CD4-positive, alpha-beta memory T cell (primary cell): ENCODE measurements at regions of chr15 and their contacts with region 1.

Region 1: GRCh38 chr15:60592371-60593169 is 113.6 kb upstream of the ICE2 start:
- DNase-seq: peak; percentile 88 to 91 (median 90)
- H3K4me3 ChIP-seq: peak overlapping the region; percentile 39 to 75
- H3K4me3 Mint-ChIP-seq: peak overlapping the region; percentile 80 to 90 (median 87)
- H3K27ac ChIP-seq: peak overlapping the region; percentile 92
- H3K27ac Mint-ChIP-seq: peak overlapping the region; percentile 82 to 94 (median 92)
- H3K4me1 ChIP-seq: peaks cover 36% of the 10 kb centered on the region
- H3K4me1 Mint-ChIP-seq: peaks cover 28 to 55% (median 37%) of the 10 kb centered on the region in 4 donors
- H3K27me3 ChIP-seq: no peaks in the 10 kb centered on the region
- H3K27me3 Mint-ChIP-seq: no peaks in the 10 kb centered on the region

Region 2: DNA sequence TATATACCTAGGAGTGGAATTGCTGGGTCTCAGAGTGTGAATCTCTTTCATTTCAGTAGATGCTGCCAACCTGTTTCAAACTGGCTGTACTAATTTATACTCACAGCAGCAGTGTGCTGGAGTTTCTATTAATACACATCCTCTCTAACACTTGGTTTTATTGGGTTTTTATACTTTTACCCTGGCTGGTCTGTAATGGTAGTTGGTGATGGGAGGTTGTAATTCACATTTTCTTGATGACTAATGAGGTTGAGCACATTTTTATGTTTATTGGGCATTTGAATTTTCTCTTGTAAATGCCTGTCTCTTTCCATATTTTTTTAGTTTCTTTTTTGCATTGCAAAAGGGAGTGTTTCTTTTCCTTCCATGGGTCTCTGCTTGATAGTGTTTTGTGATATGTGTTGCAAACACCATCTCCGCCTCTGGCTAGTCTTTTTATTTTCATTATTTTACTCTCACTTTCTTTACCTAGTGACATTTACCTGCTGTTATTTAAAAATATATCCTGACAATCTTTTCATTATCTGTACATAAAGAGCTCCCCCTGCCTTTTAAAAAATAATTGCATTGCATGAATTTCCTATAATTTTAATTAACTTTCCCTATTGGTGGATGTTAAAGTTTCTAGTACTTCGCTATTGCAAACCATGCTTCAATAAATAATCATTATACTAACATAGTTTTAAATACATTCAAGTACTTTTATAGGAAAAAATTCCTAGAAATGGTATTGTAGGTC is 1030.0 kb before region 1 on chr15:
- CTCF ChIA-PET with region 1: no interaction called
- POLR2A ChIA-PET with region 1: no interaction called
- intact Hi-C with region 1: no loop called
- DNase-seq: no peak
- H3K4me3 ChIP-seq: no peak overlapping the region
- H3K4me3 Mint-ChIP-seq: no peak overlapping the region
- H3K27ac ChIP-seq: no peak overlapping the region
- H3K27ac Mint-ChIP-seq: no peak overlapping the region
- H3K4me1 ChIP-seq: no peaks in the 10 kb centered on the region
- H3K4me1 Mint-ChIP-seq: peaks cover 0 to 3% (median 0%) of the 10 kb centered on the region in 4 donors
- H3K27me3 ChIP-seq: no peaks in the 10 kb centered on the region
- H3K27me3 Mint-ChIP-seq: peaks cover 3% of the 10 kb centered on the region in 2 donors

Region 3: DNA sequence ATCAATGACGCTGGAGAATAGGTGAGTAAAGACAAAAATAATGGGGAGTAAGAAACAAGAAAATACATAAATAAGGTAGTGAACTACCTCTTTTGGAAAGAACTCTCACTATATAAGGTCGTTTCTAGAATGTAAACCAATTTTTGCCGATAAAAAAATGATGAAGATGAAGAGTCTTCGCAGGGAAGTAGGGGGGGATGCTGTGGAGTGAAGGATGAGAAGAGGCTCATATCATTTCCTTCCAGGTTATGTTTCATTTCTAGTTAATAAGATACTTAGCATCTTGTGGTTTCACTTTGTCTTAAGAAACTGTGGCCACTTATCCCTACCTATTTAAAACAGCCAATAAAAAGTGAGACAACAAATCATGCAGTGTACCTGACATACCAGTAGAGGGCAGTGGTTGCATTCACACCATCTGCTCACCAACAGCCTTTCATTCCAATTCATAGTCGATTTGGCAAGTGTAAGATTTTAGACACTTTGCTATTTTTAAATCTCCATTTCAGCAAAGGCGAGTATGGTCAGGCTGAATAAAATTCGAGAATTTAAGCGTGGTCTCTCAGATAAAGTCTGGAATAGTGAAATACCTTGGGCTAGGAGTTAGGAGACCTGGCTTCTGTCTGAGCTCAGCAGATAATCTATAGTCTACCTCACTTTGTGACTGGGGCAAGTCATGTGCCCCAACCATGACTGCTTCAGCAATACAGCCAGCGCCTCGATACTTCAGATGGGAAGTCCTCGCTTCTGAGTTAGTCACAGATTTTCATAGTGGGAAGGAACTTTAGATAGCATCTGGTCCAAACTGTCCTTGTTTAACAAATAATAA is 84.8 kb before region 1 on chr15:
- CTCF ChIA-PET with region 1: interaction called, 4 read pairs
- POLR2A ChIA-PET with region 1: interaction called, 22 read pairs
- intact Hi-C with region 1: no loop called
- DNase-seq: peak; percentile 66 to 79 (median 78)
- H3K4me3 ChIP-seq: no peak overlapping the region
- H3K4me3 Mint-ChIP-seq: peak overlapping the region in 6 of 8 donors; percentile 0 to 67 (median 28)
- H3K27ac ChIP-seq: peak overlapping the region; percentile 21
- H3K27ac Mint-ChIP-seq: peak overlapping the region; percentile 83 to 94 (median 91)
- H3K4me1 ChIP-seq: peaks cover 43% of the 10 kb centered on the region
- H3K4me1 Mint-ChIP-seq: peaks cover 29 to 55% (median 41%) of the 10 kb centered on the region in 4 donors
- H3K27me3 ChIP-seq: no peaks in the 10 kb centered on the region
- H3K27me3 Mint-ChIP-seq: no peaks in the 10 kb centered on the region

Region 4: DNA sequence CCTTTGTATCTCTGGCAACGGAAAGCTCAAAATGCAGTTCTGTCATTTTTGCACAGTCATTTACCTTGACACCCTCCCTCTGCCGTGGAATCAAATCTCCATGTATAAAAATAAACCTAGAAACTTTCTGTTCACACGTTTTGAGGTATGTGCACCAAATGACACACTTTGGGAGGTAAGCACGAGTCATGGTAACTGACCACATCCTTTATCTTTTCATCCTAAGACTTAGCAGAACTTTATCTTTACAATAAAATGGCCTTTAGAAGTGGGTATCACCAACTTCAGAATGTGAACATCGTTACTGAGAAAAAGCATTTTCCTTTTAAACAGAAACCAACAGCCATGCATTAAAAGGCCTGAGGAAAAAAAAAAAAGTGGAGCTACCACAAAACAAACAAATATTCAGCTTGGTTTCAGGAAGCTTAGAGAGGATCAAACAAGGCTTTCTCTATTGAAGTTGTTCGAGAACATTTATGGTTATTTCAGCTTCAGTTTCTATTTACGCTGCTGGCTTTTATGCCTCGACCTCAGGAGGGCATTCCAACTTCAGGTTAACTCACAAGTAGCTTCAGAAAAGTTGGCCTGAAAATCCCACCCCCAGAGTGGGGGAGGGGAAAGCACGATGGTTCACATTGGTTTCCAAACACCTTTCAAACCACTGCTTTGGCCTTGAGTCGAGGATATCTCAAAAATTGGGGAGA is 57.4 kb after region 1 on chr15:
- CTCF ChIA-PET with region 1: interaction called, 5 read pairs
- POLR2A ChIA-PET with region 1: interaction called, 26 read pairs
- intact Hi-C with region 1: loop called (anchors 2 kb)
- DNase-seq: peak; percentile 73 to 85 (median 81)
- H3K4me3 ChIP-seq: peak overlapping the region in 1 of 2 donors; percentile 46
- H3K4me3 Mint-ChIP-seq: peak overlapping the region; percentile 67 to 92 (median 85)
- H3K27ac ChIP-seq: peak overlapping the region; percentile 66
- H3K27ac Mint-ChIP-seq: peak overlapping the region; percentile 93 to 99 (median 97)
- H3K4me1 ChIP-seq: peaks cover 46% of the 10 kb centered on the region
- H3K4me1 Mint-ChIP-seq: peaks cover 36 to 55% (median 47%) of the 10 kb centered on the region in 4 donors
- H3K27me3 ChIP-seq: no peaks in the 10 kb centered on the region
- H3K27me3 Mint-ChIP-seq: no peaks in the 10 kb centered on the region

Region 5: DNA sequence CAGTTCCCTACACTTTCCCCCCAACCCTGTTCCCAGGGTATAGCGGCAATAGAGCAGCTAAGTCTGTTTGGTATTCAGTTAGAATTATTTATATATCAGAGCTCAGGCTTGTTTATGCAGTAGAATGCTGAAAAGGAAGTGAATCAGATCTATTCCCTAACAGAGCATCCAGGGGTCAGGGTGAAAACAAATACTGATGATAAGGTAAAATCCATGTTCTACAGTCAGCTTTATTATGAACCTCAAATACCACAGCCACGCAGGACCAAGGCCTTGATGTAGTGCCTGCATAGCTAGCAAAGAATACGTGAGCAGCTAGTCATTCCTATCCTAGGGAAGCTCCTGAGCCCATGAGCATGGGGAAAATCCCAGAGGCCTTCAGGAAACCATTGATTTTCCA is 116.1 kb after region 1 on chr15:
- CTCF ChIA-PET with region 1: interaction called, 3 read pairs
- POLR2A ChIA-PET with region 1: interaction called, 14 read pairs
- intact Hi-C with region 1: loop called (anchors 5 kb)
- DNase-seq: no peak
- H3K4me3 ChIP-seq: no peak overlapping the region
- H3K4me3 Mint-ChIP-seq: peak overlapping the region in 4 of 8 donors; percentile 0 to 48 (median 6)
- H3K27ac ChIP-seq: no peak overlapping the region
- H3K27ac Mint-ChIP-seq: peak overlapping the region in 3 of 7 donors; percentile 19 to 62 (median 41)
- H3K4me1 ChIP-seq: peaks cover 38% of the 10 kb centered on the region
- H3K4me1 Mint-ChIP-seq: peaks cover 35 to 53% (median 41%) of the 10 kb centered on the region in 4 donors
- H3K27me3 ChIP-seq: no peaks in the 10 kb centered on the region
- H3K27me3 Mint-ChIP-seq: no peaks in the 10 kb centered on the region

Region 6: GRCh38 chr15:60859996-60860494 is 267.5 kb after region 1 on chr15:
- CTCF ChIA-PET with region 1: interaction called, 81 read pairs
- POLR2A ChIA-PET with region 1: interaction called, 18 read pairs
- intact Hi-C with region 1: no loop called
- DNase-seq: no peak
- H3K4me3 ChIP-seq: no peak overlapping the region
- H3K4me3 Mint-ChIP-seq: no peak overlapping the region
- H3K27ac ChIP-seq: no peak overlapping the region
- H3K27ac Mint-ChIP-seq: peak overlapping the region in 1 of 7 donors; percentile 1
- H3K4me1 ChIP-seq: peaks cover 6% of the 10 kb centered on the region
- H3K4me1 Mint-ChIP-seq: peaks cover 22 to 44% (median 33%) of the 10 kb centered on the region in 4 donors
- H3K27me3 ChIP-seq: no peaks in the 10 kb centered on the region
- H3K27me3 Mint-ChIP-seq: no peaks in the 10 kb centered on the region

Region 7: GRCh38 chr15:60932051-60932915 is 339.7 kb after region 1 on chr15:
- CTCF ChIA-PET with region 1: interaction called, 13 read pairs
- POLR2A ChIA-PET with region 1: interaction called, 7 read pairs
- intact Hi-C with region 1: loop called (anchors 5 kb)
- DNase-seq: peak; percentile 52 to 86 (median 61)
- H3K4me3 ChIP-seq: no peak overlapping the region
- H3K4me3 Mint-ChIP-seq: peak overlapping the region in 6 of 8 donors; percentile 5 to 65 (median 31)
- H3K27ac ChIP-seq: no peak overlapping the region
- H3K27ac Mint-ChIP-seq: peak overlapping the region in 4 of 7 donors; percentile 8 to 57 (median 55)
- H3K4me1 ChIP-seq: peaks cover 14% of the 10 kb centered on the region
- H3K4me1 Mint-ChIP-seq: peaks cover 9 to 25% (median 14%) of the 10 kb centered on the region in 4 donors
- H3K27me3 ChIP-seq: no peaks in the 10 kb centered on the region
- H3K27me3 Mint-ChIP-seq: no peaks in the 10 kb centered on the region